CD8-positive, alpha-beta T cell (primary cell): ENCODE measurements at regions of chr5 and their contacts with region 1.

Region 1: GRCh38 chr5:32312647-32313523 is at the start of gene MTMR12:
- DNase-seq: peak; percentile 99 to 100 (median 100)
- ATAC-seq: peak; percentile 89
- H3K4me3 ChIP-seq: peak within 1 kb of the TSS; percentile 69 to 83
- H3K4me3 Mint-ChIP-seq: peak within 1 kb of the TSS; percentile 89
- H3K27ac ChIP-seq: peak within 1 kb of the TSS; percentile 87 to 89
- H3K27ac Mint-ChIP-seq: peak within 1 kb of the TSS; percentile 93
- H3K4me1 ChIP-seq: peaks cover 22% of the 10 kb centered on the region
- H3K4me1 Mint-ChIP-seq: peaks cover 39% of the 10 kb centered on the region
- H3K27me3 ChIP-seq: no peaks in the 10 kb centered on the region
- H3K27me3 Mint-ChIP-seq: no peaks in the 10 kb centered on the region
- CTCF ChIP-seq: no peak
- total RNA-seq, gene MTMR12: 20.0 to 21.2 TPM

Region 2: GRCh38 chr5:31531888-31532710 is 780.8 kb before region 1 on chr5 and contains the starts of genes C5orf22 and DROSHA:
- CTCF ChIA-PET with region 1: no interaction called
- POLR2A ChIA-PET with region 1: no interaction called
- intact Hi-C with region 1: loop called (anchors 1 to 5 kb)
- DNase-seq: peak; percentile 72 to 96 (median 91)
- ATAC-seq: peak; percentile 97
- H3K4me3 ChIP-seq: peak within 1 kb of the TSS; percentile 87 to 91
- H3K4me3 Mint-ChIP-seq: peak within 1 kb of the TSS; percentile 99
- H3K27ac ChIP-seq: peak within 1 kb of the TSS; percentile 63 to 75
- H3K27ac Mint-ChIP-seq: peak within 1 kb of the TSS; percentile 92
- H3K4me1 ChIP-seq: peaks cover 34% of the 10 kb centered on the region
- H3K4me1 Mint-ChIP-seq: peaks cover 59% of the 10 kb centered on the region
- H3K27me3 ChIP-seq: no peaks in the 10 kb centered on the region
- H3K27me3 Mint-ChIP-seq: no peaks in the 10 kb centered on the region
- CTCF ChIP-seq: no peak
- total RNA-seq, gene C5orf22: 11.4 to 14.2 TPM
- total RNA-seq, gene DROSHA: 18.6 to 21.6 TPM

Region 3: GRCh38 chr5:31860726-31861433 is 452.0 kb before region 1 on chr5:
- CTCF ChIA-PET with region 1: no interaction called
- POLR2A ChIA-PET with region 1: no interaction called
- intact Hi-C with region 1: loop called in 1 of 2 experiments (anchors 10 kb)
- DNase-seq: no peak
- ATAC-seq: no peak
- H3K4me3 ChIP-seq: no peak overlapping the region
- H3K4me3 Mint-ChIP-seq: no peak overlapping the region
- H3K27ac ChIP-seq: no peak overlapping the region
- H3K27ac Mint-ChIP-seq: no peak overlapping the region
- H3K4me1 ChIP-seq: peaks cover 26% of the 10 kb centered on the region
- H3K4me1 Mint-ChIP-seq: peaks cover 31% of the 10 kb centered on the region
- H3K27me3 ChIP-seq: no peaks in the 10 kb centered on the region
- H3K27me3 Mint-ChIP-seq: peaks cover 8% of the 10 kb centered on the region
- CTCF ChIP-seq: no peak

Region 4: DNA sequence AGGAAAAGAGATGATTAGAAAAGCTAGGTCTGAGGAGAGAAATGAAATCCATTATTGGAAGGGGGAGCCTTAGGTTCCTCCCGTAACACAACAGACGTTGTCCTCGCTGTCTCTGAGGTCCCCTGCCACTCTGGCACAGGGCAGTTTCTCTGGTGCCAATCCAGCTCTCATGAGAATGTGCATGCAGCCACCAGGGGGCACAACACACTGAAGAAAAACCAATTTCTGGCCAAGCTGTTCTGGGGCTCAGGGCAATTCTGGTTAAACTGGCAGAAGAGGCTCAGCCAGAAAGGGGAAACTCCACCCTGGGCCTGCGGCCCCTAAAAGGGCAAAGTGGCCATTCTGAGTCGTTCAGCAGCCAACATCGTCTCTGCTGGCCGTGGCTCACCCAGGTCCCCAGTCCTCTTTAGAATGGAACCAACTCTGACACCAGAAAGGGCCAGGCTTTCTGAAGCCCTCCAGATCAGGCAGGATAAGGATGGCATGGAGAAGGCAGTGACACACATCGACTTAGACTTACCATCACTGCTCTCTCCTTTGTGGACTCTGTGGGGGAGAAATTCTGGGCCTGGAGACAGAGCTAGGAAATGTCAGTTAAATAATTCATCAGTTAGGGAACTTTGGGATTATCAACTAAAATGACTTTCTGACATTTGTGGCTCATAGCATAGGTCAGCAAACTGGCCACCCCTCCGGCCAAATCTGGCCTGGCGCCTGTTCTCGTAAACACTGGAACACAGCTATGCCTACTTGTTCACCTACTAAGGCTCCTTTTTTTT is 80.3 kb before region 1 on chr5:
- CTCF ChIA-PET with region 1: no interaction called
- POLR2A ChIA-PET with region 1: interaction called, 3 read pairs
- intact Hi-C with region 1: loop called in 1 of 2 experiments (anchors 5 kb)
- DNase-seq: peak; percentile 54 to 86 (median 76)
- ATAC-seq: peak; percentile 88
- H3K4me3 ChIP-seq: no peak overlapping the region
- H3K4me3 Mint-ChIP-seq: no peak overlapping the region
- H3K27ac ChIP-seq: peak overlapping the region in 1 of 2 experiments; percentile 23
- H3K27ac Mint-ChIP-seq: peak overlapping the region; percentile 79
- H3K4me1 ChIP-seq: no peaks in the 10 kb centered on the region
- H3K4me1 Mint-ChIP-seq: no peaks in the 10 kb centered on the region
- H3K27me3 ChIP-seq: no peaks in the 10 kb centered on the region
- H3K27me3 Mint-ChIP-seq: no peaks in the 10 kb centered on the region
- CTCF ChIP-seq: peak; percentile 61

Region 5: GRCh38 chr5:32276173-32276853 is 36.6 kb before region 1 on chr5:
- CTCF ChIA-PET with region 1: no interaction called
- POLR2A ChIA-PET with region 1: no interaction called
- intact Hi-C with region 1: loop called (anchors 2 to 5 kb)
- DNase-seq: peak in 2 of 9 experiments; percentile 36 to 70
- ATAC-seq: peak; percentile 75
- H3K4me3 ChIP-seq: no peak overlapping the region
- H3K4me3 Mint-ChIP-seq: no peak overlapping the region
- H3K27ac ChIP-seq: peak overlapping the region in 1 of 2 experiments; percentile 62
- H3K27ac Mint-ChIP-seq: peak overlapping the region; percentile 83
- H3K4me1 ChIP-seq: peaks cover 12% of the 10 kb centered on the region
- H3K4me1 Mint-ChIP-seq: peaks cover 43% of the 10 kb centered on the region
- H3K27me3 ChIP-seq: no peaks in the 10 kb centered on the region
- H3K27me3 Mint-ChIP-seq: no peaks in the 10 kb centered on the region
- CTCF ChIP-seq: no peak

Region 6: DNA sequence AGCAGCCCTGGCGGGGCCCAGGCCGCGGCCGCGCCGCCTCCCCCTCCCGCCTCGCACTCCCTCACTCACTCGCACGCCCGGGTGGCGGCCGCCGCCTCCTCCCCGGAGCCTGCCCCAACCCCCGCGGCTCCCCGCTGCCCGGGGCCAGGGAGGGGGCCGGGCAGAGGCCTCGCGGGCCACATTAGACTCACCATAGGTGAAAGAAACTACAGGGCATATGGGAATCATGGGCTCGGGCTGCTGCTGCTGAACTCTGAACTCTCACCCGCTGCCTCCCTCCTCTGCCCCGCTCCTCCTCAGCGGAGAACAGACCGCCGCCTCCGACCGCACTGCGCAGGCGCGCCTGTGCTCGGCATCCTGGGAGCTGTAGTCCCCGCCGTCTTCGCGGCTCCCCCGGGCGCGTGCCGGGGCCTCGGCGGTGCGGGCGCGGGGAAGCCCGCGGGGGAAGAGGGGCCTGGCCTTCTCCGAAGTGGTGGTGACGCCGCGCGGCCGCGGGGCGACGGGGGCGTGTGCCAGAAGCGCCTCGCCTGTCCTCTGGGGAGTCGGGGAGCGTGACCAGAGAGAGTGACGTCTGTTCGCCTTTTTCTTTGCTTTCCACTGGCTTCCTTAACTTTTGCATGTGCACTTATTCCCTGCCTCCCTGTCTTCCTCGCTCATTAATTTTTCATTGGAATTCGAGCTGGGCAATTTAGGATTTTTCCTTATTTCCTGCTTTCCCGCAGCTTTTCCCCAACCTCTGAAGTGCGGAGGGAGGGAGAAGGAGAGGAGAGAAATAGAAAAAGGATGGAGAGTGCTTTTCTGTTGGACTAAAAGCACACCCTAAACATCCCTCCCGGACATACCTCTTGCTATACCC is 131.8 kb after region 1 on chr5 and contains the start of gene ZFR:
- CTCF ChIA-PET with region 1: no interaction called
- POLR2A ChIA-PET with region 1: no interaction called
- intact Hi-C with region 1: loop called (anchors 1 kb)
- DNase-seq: peak; percentile 86 to 97 (median 92)
- ATAC-seq: peak; percentile 88
- H3K4me3 ChIP-seq: peak within 1 kb of the TSS; percentile 95 to 97
- H3K4me3 Mint-ChIP-seq: peak within 1 kb of the TSS; percentile 90
- H3K27ac ChIP-seq: peak within 1 kb of the TSS; percentile 81 to 90
- H3K27ac Mint-ChIP-seq: peak within 1 kb of the TSS; percentile 95
- H3K4me1 ChIP-seq: peaks cover 30% of the 10 kb centered on the region
- H3K4me1 Mint-ChIP-seq: peaks cover 27% of the 10 kb centered on the region
- H3K27me3 ChIP-seq: no peaks in the 10 kb centered on the region
- H3K27me3 Mint-ChIP-seq: no peaks in the 10 kb centered on the region
- CTCF ChIP-seq: no peak
- total RNA-seq, gene ZFR: 54.0 to 62.9 TPM